Endothelial cell of umbilical vein (primary cell): ENCODE measurements at regions of chr2 and their contacts with region 1.

Region 1: GRCh38 chr2:207073801-207074678 is 91.7 kb downstream of the KLF7 start:
- DNase-seq: peak; percentile 70
- H3K4me3 ChIP-seq: peak overlapping the region in 2 of 3 experiments; percentile 2 to 12
- H3K27ac ChIP-seq: peak overlapping the region; percentile 22
- H3K4me1 ChIP-seq: peaks cover 23% of the 10 kb centered on the region
- H3K27me3 ChIP-seq: no peaks in the 10 kb centered on the region
- CTCF ChIP-seq: no peak
- POLR2A ChIP-seq: peak; percentile 63

Region 2: DNA sequence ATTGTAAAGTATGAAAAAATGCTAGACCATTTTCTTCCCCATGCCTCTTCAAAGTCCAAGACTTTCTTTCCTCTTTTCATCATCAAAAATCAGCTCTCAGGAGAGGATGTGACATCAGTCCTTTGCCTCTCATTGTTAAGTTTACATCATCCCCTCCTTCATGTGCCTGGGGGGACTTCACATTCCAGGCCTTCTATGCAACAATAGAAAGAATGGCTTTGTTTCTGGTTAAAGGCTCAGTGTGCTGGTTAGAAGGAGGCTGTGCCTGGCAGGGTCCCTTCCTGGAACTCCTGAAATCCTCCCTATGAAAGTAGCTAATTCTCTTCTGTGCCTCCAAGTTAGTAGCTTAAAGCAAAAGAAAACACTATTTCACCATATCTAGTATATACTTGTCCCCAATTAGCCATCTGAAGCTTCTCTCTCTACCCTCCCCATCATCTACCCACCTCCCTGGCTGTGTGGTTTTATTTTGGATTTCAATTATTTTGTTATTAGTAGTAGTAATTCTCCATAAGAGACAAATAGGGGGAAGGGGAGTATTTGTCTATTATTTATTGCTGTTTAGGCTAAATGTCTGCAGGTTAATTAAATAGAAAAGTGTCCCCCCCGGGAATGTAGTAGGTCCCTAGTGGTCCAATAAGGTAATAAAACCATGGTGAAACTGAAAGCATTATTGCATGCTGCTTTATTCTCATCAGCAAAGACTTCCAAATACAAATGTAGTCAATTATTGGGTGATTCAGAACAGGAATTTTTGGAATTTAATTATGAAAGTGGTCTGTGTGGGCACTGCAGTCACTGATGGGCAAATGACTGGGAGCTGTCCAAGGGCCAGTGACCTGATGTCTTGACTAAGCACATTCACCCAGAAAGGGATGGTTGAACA is 65.7 kb before region 1 on chr2:
- CTCF ChIA-PET with region 1: interaction called, 5 read pairs
- POLR2A ChIA-PET with region 1: no interaction called
- dilution Hi-C with region 1: no loop called
- intact Hi-C with region 1: loop called (anchors 2 kb)
- DNase-seq: peak; percentile 35
- H3K4me3 ChIP-seq: no peak overlapping the region
- H3K27ac ChIP-seq: peak overlapping the region; percentile 37
- H3K4me1 ChIP-seq: peaks cover 18% of the 10 kb centered on the region
- H3K27me3 ChIP-seq: no peaks in the 10 kb centered on the region
- CTCF ChIP-seq: peak in 1 of 2 donors; percentile 8
- POLR2A ChIP-seq: no peak

Region 3: DNA sequence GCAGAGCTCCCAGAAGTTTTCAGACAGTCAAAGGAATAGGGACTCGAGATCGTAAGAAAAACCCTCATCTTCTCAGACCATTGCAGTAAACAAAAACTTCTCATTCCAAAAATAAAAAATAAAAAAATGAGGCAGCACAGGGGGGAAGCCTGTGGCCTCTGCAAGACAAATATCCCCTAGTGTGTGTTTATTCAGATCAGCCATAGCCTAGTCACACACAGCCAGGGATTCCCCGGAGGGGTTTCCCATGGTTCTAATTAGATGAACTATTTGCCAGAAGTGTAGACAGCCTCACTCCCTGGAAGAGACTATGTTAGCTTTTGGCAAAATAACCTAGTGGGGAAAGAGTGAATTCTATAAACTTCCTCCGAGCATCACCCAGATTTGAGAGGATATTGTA is 214.6 kb after region 1 on chr2:
- CTCF ChIA-PET with region 1: no interaction called
- POLR2A ChIA-PET with region 1: no interaction called
- dilution Hi-C with region 1: no loop called
- intact Hi-C with region 1: no loop called
- DNase-seq: no peak
- H3K4me3 ChIP-seq: no peak overlapping the region
- H3K27ac ChIP-seq: no peak overlapping the region
- H3K4me1 ChIP-seq: peaks cover under 1% of the 10 kb centered on the region
- H3K27me3 ChIP-seq: no peaks in the 10 kb centered on the region
- CTCF ChIP-seq: no peak
- POLR2A ChIP-seq: no peak